ENCODE measurements at regions of chr11 and their contacts with region 1.

Region 1: DNA sequence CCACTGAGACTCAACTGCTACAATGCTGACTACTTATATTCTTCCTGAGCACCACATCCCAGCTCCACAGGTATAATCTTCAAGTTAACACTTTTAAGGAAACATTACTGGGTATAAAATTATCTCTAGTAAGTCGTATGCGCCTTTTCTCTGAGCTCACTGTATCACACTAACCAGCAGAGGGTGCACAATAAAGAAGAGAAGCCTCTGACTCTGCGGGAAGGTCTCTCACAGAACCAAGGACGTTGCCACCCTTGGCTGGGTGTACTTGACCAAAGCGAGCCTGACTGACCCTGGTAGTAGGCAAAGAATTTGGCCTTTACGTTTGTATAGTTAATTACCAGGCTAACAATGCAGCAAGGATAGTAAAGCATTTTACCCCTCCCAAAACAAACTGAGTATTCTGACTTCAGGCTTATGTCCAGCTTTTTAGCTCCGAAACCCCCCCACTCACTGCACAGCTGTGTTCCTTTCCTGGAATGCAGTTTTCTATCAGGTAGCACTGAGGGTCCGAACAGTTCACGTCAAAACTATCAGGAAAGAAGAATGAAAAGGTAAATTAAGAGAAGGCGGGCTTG is at the start of gene BTBD18:
- DNase-seq: peak; percentile 56 to 75 (median 68)
- ATAC-seq: peak; percentile 94
- H3K4me3 ChIP-seq: no peak within 1 kb of the TSS
- H3K27ac ChIP-seq: peak within 1 kb of the TSS in 2 of 4 donors; percentile 10 to 22
- H3K4me1 ChIP-seq: peaks cover 12% of the 10 kb centered on the region
- H3K27me3 ChIP-seq: no peaks in the 10 kb centered on the region
- CTCF ChIP-seq: peak; percentile 14 to 77 (median 74)
- POLR2A ChIP-seq: no peak
- total RNA-seq, gene BTBD18: not detected

Region 2: DNA sequence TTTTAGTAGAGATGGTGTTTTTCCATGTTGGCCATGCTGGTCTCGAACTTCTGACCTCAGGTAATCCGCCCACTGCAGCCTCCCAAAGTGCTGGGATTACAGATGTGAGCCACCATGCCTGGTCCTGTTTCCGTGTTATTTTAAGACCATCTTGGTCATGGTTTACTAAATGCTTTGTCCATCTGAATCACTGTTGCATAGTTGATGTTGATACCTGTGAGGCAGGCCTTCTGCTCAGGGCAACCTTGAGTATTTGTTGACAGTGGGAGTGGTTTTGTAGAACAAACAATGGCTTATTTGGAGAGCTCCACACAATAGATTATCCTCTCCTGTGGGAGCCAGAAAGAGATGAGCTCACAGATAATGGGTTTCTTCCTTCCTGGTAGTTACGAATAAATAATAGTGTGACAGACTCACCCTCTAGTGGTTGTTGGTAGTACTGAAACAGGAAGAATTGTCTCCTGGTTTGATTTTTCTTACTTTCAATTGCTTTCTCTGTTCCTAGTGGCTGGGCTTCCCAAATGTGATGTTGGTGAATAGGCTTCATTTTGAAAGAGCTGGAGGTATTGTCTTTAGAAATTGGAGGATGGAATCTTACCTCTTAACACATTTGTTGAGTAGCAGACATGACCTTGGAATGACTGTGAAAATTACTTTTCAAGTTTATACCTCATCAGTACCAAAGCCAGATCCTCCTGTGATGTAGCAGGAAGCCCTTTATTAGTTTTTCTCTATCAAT is 48.8 kb after region 1 on chr11:
- intact Hi-C with region 1: loop called (anchors 5 kb)
- DNase-seq: peak; percentile 31 to 68 (median 36)
- ATAC-seq: peak; percentile 78
- H3K4me3 ChIP-seq: no peak overlapping the region
- H3K27ac ChIP-seq: peak overlapping the region; percentile 55 to 88 (median 72)
- H3K4me1 ChIP-seq: peaks cover 66% of the 10 kb centered on the region
- H3K27me3 ChIP-seq: no peaks in the 10 kb centered on the region
- CTCF ChIP-seq: peak; percentile 78 to 98 (median 93)
- POLR2A ChIP-seq: no peak

Measured in body of pancreas (tissue), 4 donors.